PC-3 (cell line): ENCODE measurements at regions of chr4 and their contacts with region 1.

Region 1: GRCh38 chr4:130576218-130576617 is 1480.3 kb downstream of the C4orf33 start:
- DNase-seq: no peak
- ATAC-seq: no peak
- H3K4me3 ChIP-seq: no peak overlapping the region
- H3K27ac ChIP-seq: no peak overlapping the region
- H3K4me1 ChIP-seq: no peaks in the 10 kb centered on the region
- H3K27me3 ChIP-seq: no peaks in the 10 kb centered on the region
- CTCF ChIP-seq: no peak

Region 2: DNA sequence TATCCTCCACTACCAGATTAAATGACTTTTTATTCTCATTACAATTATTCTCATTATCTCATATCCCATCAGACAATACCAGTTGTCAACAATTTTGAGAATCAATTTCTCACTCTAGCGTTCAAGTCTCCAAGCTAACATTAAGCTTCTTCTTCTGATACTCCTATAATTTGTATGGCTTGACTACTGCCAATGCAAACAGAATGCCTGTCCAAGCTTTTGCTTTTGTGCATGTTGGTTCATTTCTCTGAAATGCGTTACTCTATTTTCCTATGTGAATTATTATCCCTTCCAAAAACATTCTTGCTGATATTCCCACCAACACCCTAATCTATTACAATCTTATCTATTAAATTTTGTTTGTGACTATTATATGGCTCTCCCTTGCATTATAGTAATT is 122.0 kb after region 1 on chr4:
- CTCF ChIA-PET with region 1: no interaction called
- POLR2A ChIA-PET with region 1: no interaction called
- intact Hi-C with region 1: loop called (anchors 10 kb)
- DNase-seq: no peak
- ATAC-seq: no peak
- H3K4me3 ChIP-seq: no peak overlapping the region
- H3K27ac ChIP-seq: no peak overlapping the region
- H3K4me1 ChIP-seq: no peaks in the 10 kb centered on the region
- H3K27me3 ChIP-seq: no peaks in the 10 kb centered on the region
- CTCF ChIP-seq: no peak